ENCODE measurements at regions of chr7 and their contacts with region 1.

Region 1: GRCh38 chr7:27210441-27211083 is 10.7 kb upstream of the HOXA13 start:
- DNase-seq: peak; percentile 64
- H3K4me3 ChIP-seq: peak overlapping the region; percentile 11 to 26
- H3K27ac ChIP-seq: peak overlapping the region; percentile 34 to 96
- H3K4me1 ChIP-seq: peaks cover 8% of the 10 kb centered on the region
- H3K27me3 ChIP-seq: no peaks in the 10 kb centered on the region
- CTCF ChIP-seq: peak; percentile 51 to 85 (median 73)
- POLR2A ChIP-seq: no peak

Region 2: DNA sequence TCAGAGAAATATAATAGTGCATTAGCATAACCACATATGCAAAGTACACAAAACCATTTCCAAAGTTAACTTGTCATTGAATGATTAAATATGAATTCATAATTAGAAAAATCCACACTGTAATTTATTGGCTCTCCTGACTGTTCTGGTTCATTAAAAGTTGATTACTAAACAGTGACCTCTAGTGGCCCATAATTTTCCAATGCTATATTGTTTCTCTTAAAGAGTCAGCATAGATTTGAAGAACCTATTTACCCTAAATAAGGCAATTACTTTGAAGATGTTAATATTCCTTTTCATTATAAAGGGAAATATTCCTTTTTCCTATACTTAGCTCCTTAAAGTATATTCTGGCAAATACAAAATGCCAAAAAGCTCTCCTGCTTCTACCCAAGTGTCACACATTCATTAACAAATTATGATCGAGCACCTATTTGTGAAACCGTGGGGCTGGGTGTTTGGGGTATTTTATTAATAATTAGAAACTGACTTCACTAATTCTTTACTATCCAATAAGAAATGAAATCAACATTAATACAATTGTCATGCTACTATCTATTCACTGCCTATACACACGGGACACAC is 365.9 kb after region 1 on chr7:
- intact Hi-C with region 1: loop called (anchors 5 kb)
- DNase-seq: peak; percentile 47
- H3K4me3 ChIP-seq: no peak overlapping the region
- H3K27ac ChIP-seq: no peak overlapping the region
- H3K4me1 ChIP-seq: no peaks in the 10 kb centered on the region
- H3K27me3 ChIP-seq: no peaks in the 10 kb centered on the region
- CTCF ChIP-seq: peak; percentile 33 to 77 (median 71)
- POLR2A ChIP-seq: no peak

Region 3: DNA sequence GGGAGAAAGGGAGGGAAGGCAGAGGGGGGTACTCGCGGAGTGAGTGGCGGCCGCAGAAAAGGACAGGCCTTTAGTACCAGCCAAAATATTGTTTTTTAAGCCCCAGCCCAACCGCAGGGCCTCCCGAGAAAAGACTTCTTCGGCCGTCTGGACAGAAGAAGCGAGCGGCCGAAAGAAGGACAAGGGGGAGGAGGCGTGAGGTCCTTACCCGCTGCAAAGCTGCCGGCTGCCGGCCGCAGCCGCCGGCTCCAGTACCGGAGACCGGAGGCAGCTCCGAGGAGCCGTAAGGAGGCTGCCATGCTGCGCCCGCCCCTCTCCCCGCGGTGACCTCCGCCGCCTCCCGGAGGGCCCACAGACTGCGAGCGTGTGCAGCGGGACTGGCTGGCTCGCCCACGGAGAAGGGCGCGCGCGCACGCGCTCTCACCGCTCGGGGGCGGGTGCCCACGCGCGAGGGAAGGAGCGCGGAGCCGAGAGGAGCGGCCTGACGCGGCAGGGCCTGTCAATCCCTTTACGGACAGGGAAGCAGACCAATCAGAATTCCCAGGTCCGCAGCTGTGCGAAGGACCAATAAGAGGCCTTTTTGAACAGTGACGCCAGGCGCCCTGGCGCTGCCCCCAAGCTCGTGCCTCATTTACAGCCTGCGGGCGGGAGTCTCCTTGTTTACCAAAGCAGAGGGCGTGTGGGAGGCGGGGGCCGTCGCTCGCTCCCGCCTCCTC is 452.1 kb after region 1 on chr7 and contains the start of gene HIBADH:
- intact Hi-C with region 1: loop called (anchors 5 kb)
- DNase-seq: peak; percentile 99
- H3K4me3 ChIP-seq: peak within 1 kb of the TSS; percentile 83 to 94
- H3K27ac ChIP-seq: peak within 1 kb of the TSS; percentile 95 to 97
- H3K4me1 ChIP-seq: no peaks in the 10 kb centered on the region
- H3K27me3 ChIP-seq: no peaks in the 10 kb centered on the region
- CTCF ChIP-seq: peak in 3 of 4 experiments; percentile 20 to 61 (median 58)
- POLR2A ChIP-seq: peak; percentile 99
- total RNA-seq, gene HIBADH: 78.2 to 80.5 TPM

Region 4: DNA sequence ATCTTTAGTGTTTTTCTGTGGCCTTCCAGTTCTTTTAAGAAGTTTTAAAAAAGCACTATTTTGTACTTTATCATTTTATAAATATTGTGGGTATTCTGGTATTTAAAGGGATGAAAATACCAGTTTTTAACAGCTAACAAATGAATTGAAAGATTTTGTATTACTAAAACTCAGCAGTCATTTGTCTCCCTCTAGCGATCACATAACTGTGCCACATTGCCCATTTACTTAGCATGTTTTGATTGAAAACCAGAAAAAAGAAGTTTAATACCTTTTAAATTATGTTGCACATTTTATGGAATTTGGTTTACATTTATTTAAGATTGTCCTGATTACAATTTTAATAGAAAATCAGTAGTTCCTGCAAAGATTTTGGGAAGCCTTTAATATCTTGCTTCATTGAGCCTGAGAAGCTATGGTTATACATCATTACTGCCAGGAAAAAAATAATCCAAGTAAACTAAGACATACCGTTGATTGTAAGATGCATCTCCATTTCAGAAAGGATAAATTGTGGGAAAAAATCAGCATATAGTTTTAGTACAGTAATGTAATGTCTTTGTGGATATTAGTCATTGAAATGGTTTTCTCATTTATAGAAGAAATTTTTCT is 564.3 kb after region 1 on chr7:
- intact Hi-C with region 1: loop called (anchors 2 kb)
- DNase-seq: no peak
- H3K4me3 ChIP-seq: no peak overlapping the region
- H3K27ac ChIP-seq: no peak overlapping the region
- H3K4me1 ChIP-seq: no peaks in the 10 kb centered on the region
- H3K27me3 ChIP-seq: no peaks in the 10 kb centered on the region
- CTCF ChIP-seq: peak; percentile 23 to 74 (median 56)
- POLR2A ChIP-seq: no peak